ENCODE measurements at regions of chr21 and their contacts with region 1.

Region 1: GRCh38 chr21:28745131-28746016 is 247.3 kb downstream of the LTN1 start:
- DNase-seq: peak; percentile 84
- H3K4me3 Mint-ChIP-seq: no peak overlapping the region
- H3K27ac Mint-ChIP-seq: no peak overlapping the region
- H3K4me1 Mint-ChIP-seq: no peaks in the 10 kb centered on the region
- H3K27me3 Mint-ChIP-seq: no peaks in the 10 kb centered on the region
- CTCF ChIP-seq: peak; percentile 88

Region 2: GRCh38 chr21:27564684-27565301 is 1180.6 kb before region 1 on chr21:
- CTCF ChIA-PET with region 1: interaction called, 26 read pairs
- POLR2A ChIA-PET with region 1: no interaction called
- intact Hi-C with region 1: loop called (anchors 2 kb)
- DNase-seq: peak; percentile 51
- H3K4me3 Mint-ChIP-seq: no peak overlapping the region
- H3K27ac Mint-ChIP-seq: no peak overlapping the region
- H3K4me1 Mint-ChIP-seq: peaks cover 12% of the 10 kb centered on the region
- H3K27me3 Mint-ChIP-seq: no peaks in the 10 kb centered on the region
- CTCF ChIP-seq: peak; percentile 71

Region 3: GRCh38 chr21:28072601-28073000 is 672.8 kb before region 1 on chr21:
- CTCF ChIA-PET with region 1: interaction called, 10 read pairs
- POLR2A ChIA-PET with region 1: no interaction called
- intact Hi-C with region 1: no loop called
- DNase-seq: no peak
- H3K4me3 Mint-ChIP-seq: no peak overlapping the region
- H3K27ac Mint-ChIP-seq: no peak overlapping the region
- H3K4me1 Mint-ChIP-seq: peaks cover 9% of the 10 kb centered on the region
- H3K27me3 Mint-ChIP-seq: no peaks in the 10 kb centered on the region
- CTCF ChIP-seq: no peak

Region 4: DNA sequence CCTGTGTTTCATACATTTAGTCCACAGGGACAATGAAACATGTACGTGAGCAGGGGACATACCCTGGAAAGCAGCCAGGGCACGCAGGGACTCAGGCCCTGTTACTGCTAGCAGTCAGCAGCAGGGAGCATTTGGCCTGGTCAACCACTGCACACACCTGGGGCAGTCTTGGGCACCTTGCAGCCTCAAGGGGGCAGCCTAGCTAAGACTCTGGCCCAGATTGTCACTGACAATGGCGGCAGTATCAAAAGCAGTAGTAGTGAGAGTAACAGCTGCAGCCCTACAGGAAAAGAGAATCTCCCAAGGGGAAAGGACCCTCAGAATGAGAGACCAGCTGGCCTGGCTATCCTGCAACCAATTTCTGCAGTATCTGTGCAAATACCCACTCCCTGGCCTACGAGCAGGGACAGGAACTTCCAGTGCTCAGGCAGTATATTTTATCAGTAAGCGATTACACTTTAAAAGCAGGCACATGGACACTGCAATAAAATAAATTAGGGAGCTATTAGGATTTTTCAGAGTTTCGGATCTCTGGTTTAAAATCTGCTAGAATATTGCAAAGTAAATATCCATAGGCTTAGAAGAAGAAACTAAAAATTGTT is 228.3 kb before region 1 on chr21:
- CTCF ChIA-PET with region 1: interaction called, 111 read pairs
- POLR2A ChIA-PET with region 1: interaction called, 4 read pairs
- intact Hi-C with region 1: loop called (anchors 1 kb)
- DNase-seq: peak; percentile 78
- H3K4me3 Mint-ChIP-seq: no peak overlapping the region
- H3K27ac Mint-ChIP-seq: no peak overlapping the region
- H3K4me1 Mint-ChIP-seq: peaks cover 5% of the 10 kb centered on the region
- H3K27me3 Mint-ChIP-seq: no peaks in the 10 kb centered on the region
- CTCF ChIP-seq: peak; percentile 73

Region 5: DNA sequence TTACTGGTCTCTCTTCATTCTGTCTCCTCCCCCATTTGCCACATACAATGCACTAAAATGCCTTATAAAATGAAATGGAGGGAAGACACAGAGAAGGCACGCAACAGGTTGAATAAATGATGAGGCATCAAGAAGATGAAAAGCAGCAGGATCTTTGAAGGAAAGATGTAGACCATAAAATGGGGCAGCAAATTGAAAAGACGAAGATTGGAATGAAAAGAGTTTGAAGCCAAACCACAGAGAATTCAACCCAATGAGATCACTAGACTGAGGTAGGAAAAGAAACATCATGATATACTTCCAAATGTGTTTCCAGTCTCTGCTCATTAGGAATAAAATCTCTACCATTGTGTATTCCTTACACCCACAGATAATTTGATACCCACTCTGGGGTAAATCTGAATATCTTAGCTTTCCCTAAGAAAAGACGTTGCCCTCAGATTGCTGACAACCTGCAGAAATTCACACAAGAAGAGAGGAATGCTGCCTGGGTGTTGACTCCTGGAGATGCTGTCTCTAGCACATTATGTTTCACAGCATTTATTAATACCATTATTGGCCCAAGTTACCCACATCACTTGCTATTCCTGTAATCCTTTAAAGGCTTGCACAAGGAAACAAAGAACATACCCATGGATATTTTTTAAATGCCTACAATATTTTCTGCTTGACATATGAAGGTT is 16.4 kb after region 1 on chr21:
- CTCF ChIA-PET with region 1: interaction called, 18 read pairs
- POLR2A ChIA-PET with region 1: no interaction called
- intact Hi-C with region 1: no loop called
- DNase-seq: no peak
- H3K4me3 Mint-ChIP-seq: no peak overlapping the region
- H3K27ac Mint-ChIP-seq: no peak overlapping the region
- H3K4me1 Mint-ChIP-seq: peaks cover 8% of the 10 kb centered on the region
- H3K27me3 Mint-ChIP-seq: no peaks in the 10 kb centered on the region
- CTCF ChIP-seq: no peak

Region 6: GRCh38 chr21:29208682-29209059 is 463.3 kb after region 1 on chr21:
- CTCF ChIA-PET with region 1: no interaction called
- POLR2A ChIA-PET with region 1: no interaction called
- intact Hi-C with region 1: no loop called
- DNase-seq: no peak
- H3K4me3 Mint-ChIP-seq: no peak overlapping the region
- H3K27ac Mint-ChIP-seq: no peak overlapping the region
- H3K4me1 Mint-ChIP-seq: no peaks in the 10 kb centered on the region
- H3K27me3 Mint-ChIP-seq: no peaks in the 10 kb centered on the region
- CTCF ChIP-seq: no peak

Measured in MCF 10A (cell line).